ENCODE measurements at regions of chr10 and their contacts with region 1.

Region 1: DNA sequence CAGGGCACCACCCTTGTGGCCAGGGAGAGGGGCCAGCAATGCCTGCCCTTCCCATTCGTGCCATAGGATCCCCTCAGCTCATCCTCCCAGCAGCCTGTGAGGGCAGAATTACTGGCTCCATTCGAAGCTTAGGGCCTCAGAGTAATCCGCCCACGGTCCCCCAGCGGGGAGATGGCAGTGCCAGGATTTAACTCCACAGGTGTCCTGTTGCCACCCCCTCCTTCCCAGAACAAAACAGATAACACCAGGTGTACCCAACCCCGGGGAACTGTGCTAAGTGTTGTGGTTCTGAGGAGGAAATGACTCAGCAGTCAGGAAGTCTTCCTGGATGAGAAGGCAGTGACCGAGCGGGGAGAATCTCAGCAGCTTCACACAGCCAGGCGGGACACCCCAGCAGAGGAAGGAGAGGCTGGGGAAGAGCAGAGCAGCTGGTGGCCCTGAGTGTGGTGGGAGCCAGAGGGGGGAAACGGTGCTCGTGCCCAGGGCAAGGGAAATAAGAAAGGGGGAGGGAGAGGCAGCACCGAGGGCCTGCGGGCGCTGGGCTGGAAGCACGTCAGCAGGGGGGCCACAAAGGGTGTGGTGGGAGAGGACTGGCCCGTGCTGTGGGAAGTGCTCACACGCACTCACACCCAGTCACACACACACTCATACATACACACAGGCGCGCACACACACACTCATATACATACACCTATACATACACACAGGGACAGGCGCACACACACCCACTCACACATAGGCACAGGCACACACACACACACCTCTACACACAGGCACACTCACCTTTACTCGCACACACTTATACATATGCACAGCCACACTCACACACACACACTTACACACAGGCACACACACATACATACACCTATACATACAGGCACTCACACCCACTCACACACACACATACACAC is 59.8 kb upstream of the CHST15 start:
- DNase-seq: peak; percentile 31
- H3K4me3 ChIP-seq: peak overlapping the region; percentile 29
- H3K27ac ChIP-seq: peak overlapping the region; percentile 52
- H3K4me1 ChIP-seq: peaks cover 61% of the 10 kb centered on the region
- H3K27me3 ChIP-seq: no peaks in the 10 kb centered on the region
- CTCF ChIP-seq: no peak

Region 2: DNA sequence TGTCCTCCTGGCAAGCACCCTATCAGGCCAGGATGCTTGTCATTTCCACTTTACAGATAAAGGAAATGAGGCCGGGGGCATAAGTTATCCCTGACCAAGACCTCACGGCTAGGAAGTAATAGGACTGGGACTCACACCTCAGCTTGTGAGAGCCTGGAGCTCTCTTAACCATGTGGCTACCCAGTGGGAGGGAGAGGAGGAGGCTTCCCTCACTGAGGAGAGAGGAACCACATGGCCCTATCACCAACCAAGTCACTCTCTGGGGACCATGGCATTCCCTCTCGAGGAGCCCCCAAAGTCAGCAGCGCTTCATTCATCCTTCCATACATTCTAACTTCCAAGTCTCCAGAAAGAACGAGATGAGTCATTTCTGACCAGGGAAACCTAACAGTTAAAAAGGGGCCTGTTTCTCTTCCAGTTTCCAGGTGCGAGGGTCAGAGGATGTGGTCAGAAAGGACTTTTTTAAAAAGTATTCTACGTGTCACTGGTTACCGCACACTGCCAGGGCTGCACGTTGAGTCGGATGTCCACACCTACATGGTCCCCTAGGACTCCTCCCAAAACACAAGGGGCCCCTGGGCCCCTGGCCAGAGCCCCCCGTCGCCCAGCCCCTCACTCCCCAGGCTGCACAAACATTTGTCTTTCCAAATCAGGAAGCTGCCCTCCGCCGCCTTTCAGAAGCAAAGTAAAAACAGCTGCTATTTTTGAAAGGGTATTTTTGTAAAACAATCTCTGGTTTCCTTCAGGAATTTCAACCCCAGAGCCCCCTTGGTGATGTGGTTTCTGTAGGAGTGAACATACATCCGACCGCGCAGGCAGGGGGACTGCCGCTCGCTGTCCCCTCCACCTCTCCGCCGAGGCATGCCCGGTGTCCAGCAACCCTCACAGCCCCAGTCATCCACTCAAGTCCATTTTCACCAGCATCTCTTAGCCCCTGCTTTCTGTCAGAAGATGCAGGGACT is 68.5 kb after region 1 on chr10:
- intact Hi-C with region 1: loop called (anchors 10 kb)
- DNase-seq: no peak
- H3K4me3 ChIP-seq: peak overlapping the region; percentile 55
- H3K27ac ChIP-seq: peak overlapping the region; percentile 64
- H3K4me1 ChIP-seq: peaks cover 24% of the 10 kb centered on the region
- H3K27me3 ChIP-seq: peaks cover 60% of the 10 kb centered on the region
- CTCF ChIP-seq: no peak